IMR-90 (cell line): ENCODE measurements at regions of chr12 and their contacts with region 1.

Region 1: GRCh38 chr12:109331301-109331952 is 16.3 kb upstream of the MYO1H start:
- DNase-seq: no peak
- ATAC-seq: no peak
- H3K4me3 ChIP-seq: no peak overlapping the region
- H3K27ac ChIP-seq: no peak overlapping the region
- H3K4me1 ChIP-seq: no peaks in the 10 kb centered on the region
- H3K27me3 ChIP-seq: peaks cover 12% of the 10 kb centered on the region
- CTCF ChIP-seq: no peak
- POLR2A ChIP-seq: no peak
- RAD21 ChIP-seq: no peak

Region 2: GRCh38 chr12:109273354-109273753 is 58.1 kb before region 1 on chr12:
- CTCF ChIA-PET with region 1: no interaction called
- POLR2A ChIA-PET with region 1: no interaction called
- dilution Hi-C with region 1: no loop called
- in situ Hi-C with region 1: no loop called
- intact Hi-C with region 1: no loop called
- DNase-seq: no peak
- ATAC-seq: no peak
- H3K4me3 ChIP-seq: no peak overlapping the region
- H3K27ac ChIP-seq: no peak overlapping the region
- H3K4me1 ChIP-seq: no peaks in the 10 kb centered on the region
- H3K27me3 ChIP-seq: peaks cover 11% of the 10 kb centered on the region; the same call in 1 of the 2 replicates
- CTCF ChIP-seq: no peak
- POLR2A ChIP-seq: no peak
- RAD21 ChIP-seq: no peak

Region 3: GRCh38 chr12:109286252-109286651 is 45.2 kb before region 1 on chr12:
- CTCF ChIA-PET with region 1: no interaction called
- POLR2A ChIA-PET with region 1: no interaction called
- dilution Hi-C with region 1: no loop called
- in situ Hi-C with region 1: no loop called
- intact Hi-C with region 1: loop called (anchors 2 kb)
- DNase-seq: no peak
- ATAC-seq: no peak
- H3K4me3 ChIP-seq: no peak overlapping the region
- H3K27ac ChIP-seq: no peak overlapping the region
- H3K4me1 ChIP-seq: no peaks in the 10 kb centered on the region
- H3K27me3 ChIP-seq: peaks cover 4% of the 10 kb centered on the region; the same call in 1 of the 2 replicates
- CTCF ChIP-seq: no peak
- POLR2A ChIP-seq: no peak
- RAD21 ChIP-seq: no peak